ENCODE measurements at regions of chr6 and their contacts with region 1.

Region 1: DNA sequence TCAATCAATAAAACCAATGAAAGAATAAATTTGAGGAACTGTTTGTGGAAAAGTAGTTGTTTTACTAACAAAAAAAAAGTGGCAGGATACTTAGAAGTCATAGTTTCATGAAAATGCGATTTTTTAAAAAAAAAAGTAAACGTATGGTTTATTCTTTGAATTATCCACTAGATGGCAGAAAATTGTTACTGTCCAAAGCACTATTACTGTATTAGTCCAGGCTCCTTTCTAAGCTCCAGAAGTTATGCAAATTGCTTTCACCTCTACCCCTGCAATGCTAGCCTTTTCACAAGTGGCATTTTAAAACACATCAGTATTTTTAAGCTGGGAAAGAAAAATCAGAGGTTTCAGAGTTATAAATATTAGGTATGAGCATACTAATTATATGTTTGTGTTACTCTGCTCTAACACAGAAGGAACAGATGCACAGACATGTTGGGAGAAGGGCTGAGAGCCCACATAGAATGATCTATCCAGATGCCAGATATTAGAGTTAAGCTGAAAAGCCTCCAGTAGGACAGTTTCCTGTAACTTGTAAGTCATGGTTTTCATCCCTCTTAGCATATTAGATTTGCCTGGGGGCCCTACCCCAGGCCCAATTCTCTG is 63.9 kb downstream of the FHL5 start:
- DNase-seq: no peak
- H3K4me3 Mint-ChIP-seq: no peak overlapping the region
- H3K27ac Mint-ChIP-seq: no peak overlapping the region
- H3K4me1 Mint-ChIP-seq: no peaks in the 10 kb centered on the region
- H3K27me3 Mint-ChIP-seq: no peaks in the 10 kb centered on the region
- CTCF ChIP-seq: no peak

Region 2: DNA sequence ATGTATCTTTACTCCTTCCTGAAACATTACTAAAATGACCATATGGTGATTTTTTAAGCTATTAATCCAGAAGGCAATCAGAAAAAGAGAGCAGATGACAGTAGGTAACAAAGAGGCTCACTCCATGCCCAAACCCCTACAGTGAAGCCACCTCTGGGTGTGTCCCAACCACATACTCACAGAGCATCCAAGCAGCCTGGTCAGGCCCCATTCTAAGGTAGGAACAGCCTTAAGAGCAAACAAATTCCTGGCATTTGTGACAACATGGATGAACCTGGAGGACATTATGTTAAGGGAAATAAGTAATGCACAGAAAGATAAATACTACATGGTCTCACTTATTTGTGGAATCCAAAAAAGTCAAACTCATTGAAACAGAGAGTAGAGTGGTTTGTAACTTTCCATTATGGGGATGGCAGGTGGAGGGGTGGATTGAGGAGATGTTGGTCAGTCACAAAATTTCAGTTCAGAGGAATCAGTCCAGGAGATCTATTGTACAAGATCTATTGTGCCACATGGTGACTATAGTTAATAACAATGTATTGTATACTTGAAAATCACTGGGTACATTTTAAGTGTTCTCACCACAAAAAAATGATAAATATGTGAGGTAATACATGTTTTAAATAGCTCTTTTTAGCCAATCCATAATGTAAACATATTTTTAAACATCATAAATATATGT is 130.1 kb after region 1 on chr6:
- CTCF ChIA-PET with region 1: no interaction called
- intact Hi-C with region 1: loop called (anchors 5 kb)
- DNase-seq: no peak
- H3K4me3 Mint-ChIP-seq: no peak overlapping the region
- H3K27ac Mint-ChIP-seq: no peak overlapping the region
- H3K4me1 Mint-ChIP-seq: no peaks in the 10 kb centered on the region
- H3K27me3 Mint-ChIP-seq: no peaks in the 10 kb centered on the region
- CTCF ChIP-seq: no peak

Region 3: GRCh38 chr6:97053643-97054411 is 427.0 kb after region 1 on chr6:
- CTCF ChIA-PET with region 1: interaction called, 5 read pairs
- intact Hi-C with region 1: loop called (anchors 1 kb)
- DNase-seq: no peak
- H3K4me3 Mint-ChIP-seq: no peak overlapping the region
- H3K27ac Mint-ChIP-seq: no peak overlapping the region
- H3K4me1 Mint-ChIP-seq: no peaks in the 10 kb centered on the region
- H3K27me3 Mint-ChIP-seq: peaks cover 22% of the 10 kb centered on the region
- CTCF ChIP-seq: no peak

Measured in Calu3 (cell line).